Transverse colon (tissue), 4 donors: ENCODE measurements at regions of chr16 and their contacts with region 1.

Region 1: DNA sequence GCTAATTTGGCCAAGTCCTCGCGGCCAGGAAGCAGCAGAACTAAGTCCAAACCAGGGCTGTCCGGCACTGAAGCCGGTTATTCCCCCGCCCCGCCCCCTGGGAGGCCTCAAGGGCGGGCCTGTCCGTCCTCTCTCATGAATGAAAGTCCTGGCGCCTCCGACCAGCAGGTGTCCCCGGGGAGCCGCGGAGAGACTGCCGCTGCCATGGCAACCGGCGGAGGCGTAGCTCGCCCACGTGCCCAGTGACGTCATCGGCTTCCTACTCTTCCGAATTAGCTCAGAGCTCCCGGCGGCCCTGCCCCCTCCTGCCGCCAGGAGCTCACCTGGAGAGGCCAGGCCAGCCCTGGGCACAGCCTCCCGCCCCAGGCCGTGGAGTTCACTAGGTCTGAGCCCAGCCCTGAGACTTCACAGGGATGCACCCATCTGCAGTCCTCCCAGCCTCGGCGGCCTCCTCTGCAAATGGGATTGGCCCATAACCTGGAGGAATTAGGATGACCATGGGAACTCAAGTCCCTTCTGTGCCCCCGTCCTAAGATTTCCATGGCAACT is 1.3 kb downstream of the SPATA2L start:
- DNase-seq: peak; percentile 100
- H3K4me3 ChIP-seq: peak overlapping the region in 3 of 4 donors; percentile 73 to 77 (median 73)
- H3K27ac ChIP-seq: peak overlapping the region; percentile 91 to 96 (median 94)
- H3K4me1 ChIP-seq: peaks cover 4 to 30% (median 22%) of the 10 kb centered on the region in 4 donors
- H3K27me3 ChIP-seq: no peaks in the 10 kb centered on the region
- CTCF ChIP-seq: peak; percentile 73 to 97 (median 84)
- EP300 ChIP-seq: no peak
- POLR2A ChIP-seq: peak; percentile 49

Region 2: GRCh38 chr16:89765292-89765830 is 65.2 kb after region 1 on chr16:
- in situ Hi-C with region 1: no loop called
- intact Hi-C with region 1: no loop called
- DNase-seq: no peak
- H3K4me3 ChIP-seq: peak overlapping the region in 2 of 4 donors; percentile 22 to 35
- H3K27ac ChIP-seq: peak overlapping the region; percentile 70 to 84 (median 76)
- H3K4me1 ChIP-seq: peaks cover 4 to 12% (median 5%) of the 10 kb centered on the region in 4 donors
- H3K27me3 ChIP-seq: no peaks in the 10 kb centered on the region
- CTCF ChIP-seq: no peak
- EP300 ChIP-seq: no peak
- POLR2A ChIP-seq: no peak

Region 3: GRCh38 chr16:89798832-89799370 is 98.7 kb after region 1 on chr16:
- in situ Hi-C with region 1: loop called in 2 of 4 experiments (anchors 10 kb)
- intact Hi-C with region 1: loop called (anchors 10 kb)
- DNase-seq: no peak
- H3K4me3 ChIP-seq: no peak overlapping the region
- H3K27ac ChIP-seq: peak overlapping the region in 1 of 4 donors; percentile 24
- H3K4me1 ChIP-seq: no peaks in the 10 kb centered on the region
- H3K27me3 ChIP-seq: no peaks in the 10 kb centered on the region
- CTCF ChIP-seq: no peak
- EP300 ChIP-seq: no peak
- POLR2A ChIP-seq: no peak

Region 4: GRCh38 chr16:89873972-89874689 is 174.0 kb after region 1 on chr16:
- in situ Hi-C with region 1: no loop called
- intact Hi-C with region 1: loop called (anchors 5 kb)
- DNase-seq: peak; percentile 97
- H3K4me3 ChIP-seq: peak overlapping the region; percentile 69 to 100 (median 74)
- H3K27ac ChIP-seq: peak overlapping the region; percentile 97 to 100 (median 99)
- H3K4me1 ChIP-seq: peaks cover 10 to 27% (median 23%) of the 10 kb centered on the region in 4 donors
- H3K27me3 ChIP-seq: no peaks in the 10 kb centered on the region
- CTCF ChIP-seq: no peak
- EP300 ChIP-seq: no peak
- POLR2A ChIP-seq: no peak